Motor neuron (in vitro differentiated cells): ENCODE measurements at regions of chr18 and their contacts with region 1.

Region 1: DNA sequence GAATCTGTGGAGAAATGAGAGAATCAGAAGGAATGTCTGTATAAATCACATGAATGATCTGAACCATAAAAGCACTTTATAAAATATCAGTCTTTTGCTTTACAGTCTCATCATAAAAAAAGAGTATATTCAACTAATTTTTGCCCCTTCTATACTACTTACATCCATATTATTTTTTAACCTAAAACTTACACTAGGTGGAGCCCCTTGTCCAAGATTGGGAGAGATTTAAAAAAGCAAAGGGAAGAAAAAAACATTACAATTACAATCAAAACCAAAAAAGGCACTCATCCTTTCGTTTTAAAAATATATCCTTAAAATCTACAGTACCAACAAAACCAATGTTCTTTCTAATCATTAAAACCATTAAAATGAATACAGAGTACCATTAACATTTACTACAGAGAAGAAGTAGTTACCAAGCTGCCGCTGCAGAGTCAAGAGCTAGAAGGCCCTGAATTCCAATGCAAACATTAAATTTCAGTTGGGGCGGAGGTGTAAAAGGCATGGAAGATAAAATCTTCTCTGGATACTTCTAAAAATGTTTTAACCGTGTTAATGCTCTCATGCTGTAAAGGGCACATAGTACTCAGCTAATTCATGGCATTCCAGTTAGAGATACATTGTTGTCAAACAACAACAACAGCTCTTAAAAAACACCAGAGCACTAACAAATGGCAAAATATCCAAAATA is 56.7 kb upstream of the EPB41L3 start:
- ATAC-seq: peak in 1 of 8 experiments; percentile 35
- H3K4me3 ChIP-seq: no peak overlapping the region
- H3K27ac ChIP-seq: no peak overlapping the region
- H3K4me1 ChIP-seq: peaks cover 0 to 3% of the 10 kb centered on the region in 2 donors

Region 2: DNA sequence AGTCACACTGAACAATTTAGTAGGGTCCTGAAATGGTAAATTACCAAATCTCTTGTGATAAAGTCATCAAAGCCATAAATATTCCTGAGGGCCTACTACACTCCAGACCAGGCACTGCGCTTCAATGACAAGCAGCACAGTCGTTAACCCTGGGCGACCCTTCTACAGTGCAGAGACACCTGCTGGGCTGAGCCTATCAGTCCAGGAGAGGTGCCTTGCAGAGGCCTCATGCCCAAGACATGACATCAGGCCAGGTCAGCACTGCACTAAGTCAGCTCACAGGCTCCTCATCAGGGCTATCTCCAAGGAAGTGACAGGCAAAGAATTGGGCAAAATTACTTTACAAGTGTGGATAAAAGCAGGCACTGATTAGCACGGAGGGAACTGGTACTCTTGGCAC is 109.7 kb after region 1 on chr18:
- in situ Hi-C with region 1: no loop called
- ATAC-seq: peak in 1 of 8 experiments; percentile 39
- H3K4me3 ChIP-seq: no peak overlapping the region
- H3K27ac ChIP-seq: no peak overlapping the region
- H3K4me1 ChIP-seq: no peaks in the 10 kb centered on the region

Region 3: GRCh38 chr18:5841518-5841917 is 241.0 kb after region 1 on chr18:
- in situ Hi-C with region 1: loop called in 1 of 9 experiments (anchors 25 kb)
- ATAC-seq: peak in 1 of 8 experiments; percentile 45
- H3K4me3 ChIP-seq: no peak overlapping the region
- H3K27ac ChIP-seq: no peak overlapping the region
- H3K4me1 ChIP-seq: peaks cover 7 to 16% of the 10 kb centered on the region in 2 donors

Region 4: DNA sequence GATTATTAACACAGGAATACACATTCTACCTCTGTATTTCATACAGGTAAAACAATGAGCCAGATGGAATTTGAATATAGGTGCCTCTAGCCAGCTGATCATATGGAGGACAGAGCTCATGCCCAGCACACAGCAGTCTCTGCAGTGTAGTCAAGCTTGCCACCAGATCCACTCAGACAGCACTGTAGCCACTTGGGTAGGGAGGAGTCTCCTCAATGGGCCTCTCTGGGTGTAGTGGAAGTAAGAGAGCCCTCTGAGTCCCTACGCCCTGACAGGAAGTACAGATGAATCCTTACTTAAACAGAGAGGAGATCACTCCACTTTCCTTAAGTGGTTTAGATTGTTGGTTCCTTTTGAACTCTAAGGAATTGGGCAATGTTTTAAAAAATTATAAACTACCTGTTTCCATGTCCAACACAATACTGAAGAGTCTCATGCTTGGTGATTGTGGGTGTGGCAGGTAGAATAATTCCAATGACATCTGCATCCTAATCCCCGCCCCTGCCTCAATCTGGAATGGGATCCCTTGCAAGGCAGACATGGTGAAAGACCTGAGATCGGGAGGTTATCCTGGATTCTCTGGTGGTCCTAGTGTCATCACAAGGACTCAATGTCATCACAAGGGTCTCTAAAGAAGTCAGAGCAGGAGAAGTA is 317.8 kb after region 1 on chr18:
- in situ Hi-C with region 1: no loop called
- ATAC-seq: peak in 2 of 8 experiments; percentile 23 to 71
- H3K4me3 ChIP-seq: no peak overlapping the region
- H3K27ac ChIP-seq: no peak overlapping the region
- H3K4me1 ChIP-seq: no peaks in the 10 kb centered on the region